Lower leg skin (tissue), 4 donors: ENCODE measurements at regions of chr7 and their contacts with region 1.

Region 1: DNA sequence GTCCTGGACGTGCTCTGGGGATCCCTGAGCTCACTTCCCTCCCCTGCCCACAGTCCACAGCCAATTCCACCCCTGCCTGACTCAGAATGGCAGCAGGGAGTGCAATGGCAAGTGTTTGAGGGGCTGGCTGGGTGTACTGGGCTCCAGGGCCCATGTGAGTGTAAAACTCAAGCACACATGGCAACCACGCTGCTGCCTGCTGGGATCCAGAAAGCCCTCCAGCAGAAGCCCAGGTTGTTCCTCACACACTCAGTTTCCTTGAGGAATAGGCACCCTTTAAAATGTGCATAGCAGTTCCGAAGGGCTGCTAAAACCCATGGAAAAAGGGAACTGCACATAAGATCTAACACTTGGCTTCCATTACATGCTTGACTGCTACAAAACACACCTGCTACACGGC is 11.3 kb upstream of the ATP6V0A4 start:
- DNase-seq: peak in 1 of 2 donors; percentile 59
- H3K4me3 ChIP-seq: no peak overlapping the region
- CTCF ChIP-seq: no peak
- POLR2A ChIP-seq: no peak

Region 2: GRCh38 chr7:138468244-138469123 is 340.9 kb before region 1 on chr7:
- intact Hi-C with region 1: loop called (anchors 5 kb)
- DNase-seq: no peak
- H3K4me3 ChIP-seq: no peak overlapping the region
- CTCF ChIP-seq: no peak
- POLR2A ChIP-seq: no peak